Endothelial cell of umbilical vein (primary cell): ENCODE measurements at regions of chr2 and their contacts with region 1.

Region 1: GRCh38 chr2:231110551-231110950 is 14.3 kb downstream of the HTR2B start:
- DNase-seq: peak; percentile 84
- H3K4me3 ChIP-seq: no peak overlapping the region
- H3K27ac ChIP-seq: no peak overlapping the region
- H3K4me1 ChIP-seq: peaks cover 12% of the 10 kb centered on the region
- H3K27me3 ChIP-seq: no peaks in the 10 kb centered on the region
- CTCF ChIP-seq: peak; percentile 15 to 30
- POLR2A ChIP-seq: no peak

Region 2: DNA sequence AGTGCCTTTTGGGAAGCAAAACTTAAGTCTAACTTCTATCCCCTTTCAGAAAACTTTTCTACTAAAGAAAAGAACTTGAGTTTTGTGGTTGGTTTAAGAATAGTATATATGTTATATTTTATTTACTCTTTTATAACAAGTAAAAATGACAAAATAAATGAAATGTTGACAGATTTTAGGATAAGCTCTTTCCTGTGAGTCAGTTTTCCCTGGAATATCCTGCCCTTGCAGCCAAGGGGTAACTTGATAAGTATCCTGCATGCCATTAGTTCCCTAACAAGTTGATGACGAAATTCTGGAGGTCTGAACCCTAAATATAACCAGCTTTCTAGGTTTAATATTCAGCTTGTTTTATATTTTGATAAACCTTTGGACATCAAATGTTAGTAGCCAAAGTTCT is 21.6 kb after region 1 on chr2:
- CTCF ChIA-PET with region 1: interaction called, 17 read pairs
- POLR2A ChIA-PET with region 1: no interaction called
- dilution Hi-C with region 1: no loop called
- intact Hi-C with region 1: no loop called
- DNase-seq: peak; percentile 84
- H3K4me3 ChIP-seq: peak overlapping the region in 1 of 3 experiments; percentile 6
- H3K27ac ChIP-seq: peak overlapping the region; percentile 65
- H3K4me1 ChIP-seq: peaks cover 33% of the 10 kb centered on the region
- H3K27me3 ChIP-seq: no peaks in the 10 kb centered on the region
- CTCF ChIP-seq: no peak
- POLR2A ChIP-seq: no peak

Region 3: DNA sequence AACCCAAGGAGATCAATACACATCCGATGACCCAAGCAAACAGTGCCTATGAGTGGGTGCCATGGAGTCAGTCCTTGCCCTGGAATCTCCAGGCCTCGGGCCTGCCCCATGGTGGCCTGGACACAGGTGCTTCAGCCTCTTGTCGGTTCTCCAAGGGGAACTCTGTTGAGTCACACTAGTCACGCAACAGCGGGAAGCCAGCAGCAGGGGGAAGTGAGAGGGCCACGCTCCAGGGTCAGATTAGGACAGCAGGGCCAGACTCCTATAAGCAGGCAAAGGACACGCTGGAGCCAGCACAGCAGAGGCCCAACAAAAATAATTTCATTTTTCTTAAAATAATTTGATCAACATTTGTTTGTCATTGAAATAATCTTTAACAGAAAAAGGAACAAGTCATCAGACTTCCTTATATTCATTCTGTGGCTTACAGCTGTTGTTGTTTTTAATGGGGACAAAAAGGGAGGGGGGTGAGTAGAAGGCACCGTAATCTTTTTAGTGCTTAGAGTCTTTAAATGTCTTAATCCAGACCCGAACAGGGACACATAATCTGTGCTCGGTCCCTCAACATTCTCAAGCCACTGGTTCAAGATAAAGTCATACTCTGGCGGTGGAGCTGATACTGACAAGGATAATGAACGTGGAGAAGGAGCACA is 71.4 kb after region 1 on chr2:
- CTCF ChIA-PET with region 1: interaction called, 30 read pairs
- POLR2A ChIA-PET with region 1: no interaction called
- dilution Hi-C with region 1: no loop called
- intact Hi-C with region 1: no loop called
- DNase-seq: peak; percentile 91
- H3K4me3 ChIP-seq: no peak overlapping the region
- H3K27ac ChIP-seq: peak overlapping the region; percentile 75
- H3K4me1 ChIP-seq: peaks cover 48% of the 10 kb centered on the region
- H3K27me3 ChIP-seq: no peaks in the 10 kb centered on the region
- CTCF ChIP-seq: no peak
- POLR2A ChIP-seq: no peak

Region 4: GRCh38 chr2:231198291-231199173 is 88.0 kb after region 1 on chr2 and contains the start of gene ARMC9:
- CTCF ChIA-PET with region 1: interaction called, 226 read pairs
- POLR2A ChIA-PET with region 1: no interaction called
- dilution Hi-C with region 1: no loop called
- intact Hi-C with region 1: no loop called
- DNase-seq: peak; percentile 68
- H3K4me3 ChIP-seq: peak within 1 kb of the TSS; percentile 60 to 91 (median 81)
- H3K27ac ChIP-seq: peak within 1 kb of the TSS; percentile 0
- H3K4me1 ChIP-seq: peaks cover 13% of the 10 kb centered on the region
- H3K27me3 ChIP-seq: no peaks in the 10 kb centered on the region
- CTCF ChIP-seq: no peak
- POLR2A ChIP-seq: peak; percentile 90
- total RNA-seq, gene ARMC9: 19.3 and 24.2 TPM in 2 replicates